ENCODE measurements at regions of chr11 and their contacts with region 1.

Region 1: DNA sequence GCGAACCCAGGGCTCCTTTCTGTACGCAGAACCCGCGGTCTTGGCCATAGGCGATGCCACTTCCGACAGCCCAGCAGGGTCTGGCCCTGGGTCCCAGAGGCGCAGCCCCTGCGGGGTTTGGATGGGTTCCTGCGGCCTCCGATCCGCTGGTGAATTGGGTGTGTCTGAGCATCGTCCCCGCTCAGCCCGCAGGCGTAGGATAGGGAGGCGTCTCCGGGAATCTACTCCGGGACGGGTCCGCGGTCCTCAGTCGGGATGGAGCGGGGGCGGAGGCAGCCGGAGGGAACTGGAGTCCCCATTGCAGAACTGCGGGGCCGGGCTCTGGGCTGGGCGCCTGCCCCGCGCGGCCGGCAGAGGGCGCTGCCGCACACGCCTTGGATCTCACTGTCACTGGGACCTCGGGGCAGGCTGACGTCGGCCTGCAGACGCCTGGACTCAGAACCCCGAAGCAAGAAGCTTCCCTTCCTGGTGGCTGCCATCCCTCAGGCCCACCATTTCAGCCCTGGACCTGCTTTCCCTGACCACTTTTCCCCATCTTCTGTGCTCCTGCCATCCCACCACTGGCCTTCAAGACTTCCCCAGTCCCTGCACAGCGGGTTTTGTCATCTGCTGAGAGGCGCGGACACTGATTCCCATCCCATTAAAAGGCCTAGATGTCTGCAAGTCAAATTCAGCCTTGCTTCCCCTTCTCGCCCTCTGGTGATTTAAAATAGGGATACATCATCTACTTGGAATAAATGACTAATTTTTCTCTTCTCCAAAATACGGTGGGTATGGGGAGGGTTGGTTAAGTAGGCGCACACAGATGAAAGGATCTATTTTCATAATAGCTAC is 38.3 kb upstream of the CREB3L1 start:
- DNase-seq: peak; percentile 75
- H3K4me3 ChIP-seq: peak overlapping the region; percentile 22 to 34 (median 31)
- H3K27ac ChIP-seq: no peak overlapping the region
- H3K4me1 ChIP-seq: peaks cover 42% of the 10 kb centered on the region
- H3K27me3 ChIP-seq: no peaks in the 10 kb centered on the region
- CTCF ChIP-seq: peak; percentile 78 to 95

Region 2: GRCh38 chr11:45846974-45847910 is 391.9 kb before region 1 on chr11 and contains the start of gene CRY2:
- CTCF ChIA-PET with region 1: no interaction called
- dilution Hi-C with region 1: no loop called
- in situ Hi-C with region 1: no loop called
- intact Hi-C with region 1: loop called (anchors 2 kb)
- DNase-seq: peak; percentile 97
- H3K4me3 ChIP-seq: peak within 1 kb of the TSS; percentile 76 to 98 (median 98)
- H3K27ac ChIP-seq: peak within 1 kb of the TSS; percentile 80
- H3K4me1 ChIP-seq: peaks cover 8% of the 10 kb centered on the region
- H3K27me3 ChIP-seq: no peaks in the 10 kb centered on the region
- CTCF ChIP-seq: no peak
- total RNA-seq, gene CRY2: 13.2 to 14.0 TPM

Region 3: GRCh38 chr11:45993531-45994001 is 245.6 kb before region 1 on chr11:
- CTCF ChIA-PET with region 1: no interaction called
- dilution Hi-C with region 1: no loop called
- in situ Hi-C with region 1: no loop called
- intact Hi-C with region 1: no loop called
- DNase-seq: no peak
- H3K4me3 ChIP-seq: no peak overlapping the region
- H3K27ac ChIP-seq: no peak overlapping the region
- H3K4me1 ChIP-seq: no peaks in the 10 kb centered on the region
- H3K27me3 ChIP-seq: no peaks in the 10 kb centered on the region
- CTCF ChIP-seq: no peak

Region 4: DNA sequence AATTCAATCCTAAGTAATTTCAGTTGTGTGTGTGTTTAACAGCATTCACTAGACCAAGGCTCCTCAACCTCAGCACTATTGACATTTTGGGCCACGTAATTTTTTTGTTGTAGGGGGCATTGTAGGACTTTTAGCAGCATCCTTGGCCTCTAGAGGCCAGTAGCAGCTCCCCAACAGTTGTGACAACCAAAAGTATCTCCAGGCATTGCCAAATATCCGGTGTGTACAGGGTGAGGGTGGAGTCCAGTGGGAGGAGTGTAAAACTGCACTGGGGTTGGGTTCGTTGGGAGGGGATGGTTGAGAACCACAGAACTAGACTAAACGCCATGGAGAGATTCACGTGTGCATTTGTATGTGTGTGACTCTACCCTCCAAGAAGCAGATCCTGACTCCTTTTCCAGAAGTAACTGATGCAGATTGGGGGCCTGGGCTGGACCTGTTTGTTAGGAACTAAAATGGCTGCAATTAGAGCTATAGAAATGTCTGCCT is 112.0 kb before region 1 on chr11:
- CTCF ChIA-PET with region 1: no interaction called
- dilution Hi-C with region 1: loop called (anchors 5 kb)
- in situ Hi-C with region 1: no loop called
- intact Hi-C with region 1: loop called (anchors 1 kb)
- DNase-seq: peak; percentile 73
- H3K4me3 ChIP-seq: no peak overlapping the region
- H3K27ac ChIP-seq: no peak overlapping the region
- H3K4me1 ChIP-seq: peaks cover 7% of the 10 kb centered on the region
- H3K27me3 ChIP-seq: no peaks in the 10 kb centered on the region
- CTCF ChIP-seq: peak; percentile 55 to 67

Region 5: DNA sequence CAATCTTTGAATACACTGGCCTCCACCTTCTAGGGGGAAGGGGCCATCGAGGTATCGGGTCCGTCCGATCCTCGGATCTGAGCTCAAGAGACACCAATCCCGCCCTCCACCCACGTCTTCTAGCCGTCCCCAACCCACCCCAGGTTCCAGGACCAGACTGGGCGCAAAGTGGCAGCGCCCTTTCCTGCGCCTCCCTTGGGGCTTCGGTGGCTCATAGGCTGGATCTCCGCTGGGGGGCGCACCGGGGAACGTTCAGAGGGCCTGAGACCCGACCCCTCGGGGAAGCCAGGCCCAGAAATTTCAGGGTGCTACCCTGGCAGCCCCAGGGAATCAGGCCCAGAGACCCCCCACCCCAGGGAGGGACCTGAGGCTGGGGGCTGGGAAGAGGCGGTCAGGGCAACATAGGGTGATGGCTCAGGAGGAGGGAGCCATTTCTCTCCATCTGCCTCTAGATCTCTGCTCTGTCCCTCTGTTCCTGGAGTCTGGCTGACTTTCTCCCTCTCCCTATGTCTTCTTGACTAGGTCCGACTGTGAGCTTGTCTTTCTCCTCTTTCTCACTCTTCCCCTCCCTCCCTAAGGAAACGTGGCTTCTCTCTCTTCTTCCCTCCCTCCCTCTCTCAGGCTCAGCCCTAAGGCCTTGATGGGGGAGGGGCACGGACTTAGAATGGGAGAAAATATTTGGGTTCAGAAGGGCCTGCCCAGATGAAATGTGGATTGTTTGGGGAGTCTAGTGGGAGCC is 39.4 kb after region 1 on chr11:
- CTCF ChIA-PET with region 1: no interaction called
- dilution Hi-C with region 1: loop called (anchors 5 kb)
- in situ Hi-C with region 1: no loop called
- intact Hi-C with region 1: no loop called
- DNase-seq: no peak
- H3K4me3 ChIP-seq: no peak overlapping the region
- H3K27ac ChIP-seq: no peak overlapping the region
- H3K4me1 ChIP-seq: peaks cover 2% of the 10 kb centered on the region
- H3K27me3 ChIP-seq: peaks cover 12% of the 10 kb centered on the region
- CTCF ChIP-seq: peak in 1 of 2 donors; percentile 21

Region 6: GRCh38 chr11:46315033-46315738 is 76.0 kb after region 1 on chr11:
- CTCF ChIA-PET with region 1: interaction called, 3 read pairs
- dilution Hi-C with region 1: loop called (anchors 5 kb)
- in situ Hi-C with region 1: no loop called
- intact Hi-C with region 1: loop called (anchors 1 kb)
- DNase-seq: peak; percentile 58
- H3K4me3 ChIP-seq: no peak overlapping the region
- H3K27ac ChIP-seq: no peak overlapping the region
- H3K4me1 ChIP-seq: no peaks in the 10 kb centered on the region
- H3K27me3 ChIP-seq: no peaks in the 10 kb centered on the region
- CTCF ChIP-seq: peak; percentile 90 to 95

Region 7: GRCh38 chr11:46529095-46529905 is 290.1 kb after region 1 on chr11:
- CTCF ChIA-PET with region 1: no interaction called
- dilution Hi-C with region 1: no loop called
- in situ Hi-C with region 1: loop called in 1 of 2 experiments (anchors 10 kb)
- intact Hi-C with region 1: no loop called
- DNase-seq: peak; percentile 21
- H3K4me3 ChIP-seq: no peak overlapping the region
- H3K27ac ChIP-seq: no peak overlapping the region
- H3K4me1 ChIP-seq: no peaks in the 10 kb centered on the region
- H3K27me3 ChIP-seq: no peaks in the 10 kb centered on the region
- CTCF ChIP-seq: peak; percentile 92 to 95

Region 8: GRCh38 chr11:47121056-47121455 is 881.9 kb after region 1 on chr11:
- CTCF ChIA-PET with region 1: no interaction called
- dilution Hi-C with region 1: no loop called
- in situ Hi-C with region 1: no loop called
- intact Hi-C with region 1: no loop called
- DNase-seq: no peak
- H3K4me3 ChIP-seq: no peak overlapping the region
- H3K27ac ChIP-seq: no peak overlapping the region
- H3K4me1 ChIP-seq: peaks cover 3% of the 10 kb centered on the region
- H3K27me3 ChIP-seq: no peaks in the 10 kb centered on the region
- CTCF ChIP-seq: no peak